Right cardiac atrium (tissue), 5 donors: ENCODE measurements at regions of chr7 and their contacts with region 1.

Region 1: DNA sequence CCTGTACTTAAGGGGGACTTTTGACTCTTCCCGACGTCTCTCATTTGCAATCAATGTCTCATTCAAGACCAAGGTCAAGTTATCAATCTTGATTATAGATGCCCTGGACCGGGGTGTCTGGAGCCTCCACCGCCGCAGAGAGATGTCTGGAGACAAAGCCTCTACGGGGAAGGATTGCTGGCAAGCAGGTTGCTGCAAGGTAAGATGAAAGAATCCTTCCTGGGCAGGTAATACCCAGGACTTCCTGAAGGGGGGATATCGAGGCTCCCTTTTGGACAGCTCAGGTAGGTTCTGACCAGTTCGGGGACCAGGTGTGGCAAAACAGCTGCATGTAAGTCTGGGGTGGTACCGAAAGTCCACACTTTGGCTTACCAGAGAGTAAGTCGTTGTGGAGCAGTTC is 12.5 kb upstream of the CUX1 start:
- DNase-seq: no peak
- ATAC-seq: no peak
- H3K4me3 ChIP-seq: no peak overlapping the region
- H3K27ac ChIP-seq: no peak overlapping the region
- H3K4me1 ChIP-seq: no peaks in the 10 kb centered on the region
- H3K27me3 ChIP-seq: no peaks in the 10 kb centered on the region

Region 2: DNA sequence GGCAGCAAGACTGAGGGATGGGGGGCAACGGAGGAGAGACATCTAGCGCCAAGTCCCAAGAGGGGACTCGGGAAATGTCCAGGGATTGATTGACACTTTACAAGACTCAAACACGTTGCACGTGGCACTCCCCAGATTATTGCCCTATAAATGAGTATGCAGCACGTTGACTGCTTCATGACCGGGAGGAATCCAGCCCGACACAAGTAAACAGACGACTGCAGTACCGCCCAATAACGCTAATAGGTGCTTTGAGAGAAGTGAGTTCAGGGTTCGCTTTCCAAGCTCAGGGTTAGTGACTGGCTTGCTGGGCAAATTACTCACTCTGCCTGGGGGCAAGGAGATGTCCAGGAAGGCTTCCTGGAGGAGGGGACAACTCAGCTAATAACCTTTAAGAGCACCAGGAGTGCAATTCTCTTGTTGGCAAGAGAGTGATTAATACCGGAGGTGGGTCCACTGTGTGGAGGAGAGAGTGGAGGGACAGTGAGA is 102.6 kb before region 1 on chr7:
- intact Hi-C with region 1: loop called in 1 of 4 experiments (anchors 10 kb)
- DNase-seq: no peak
- ATAC-seq: no peak
- H3K4me3 ChIP-seq: no peak overlapping the region
- H3K27ac ChIP-seq: no peak overlapping the region
- H3K4me1 ChIP-seq: no peaks in the 10 kb centered on the region
- H3K27me3 ChIP-seq: no peaks in the 10 kb centered on the region

Region 3: GRCh38 chr7:101743241-101743994 is 61.5 kb before region 1 on chr7:
- intact Hi-C with region 1: loop called in 3 of 4 experiments (anchors 5 to 10 kb)
- DNase-seq: peak; percentile 50 to 82 (median 81)
- ATAC-seq: peak; percentile 69 to 76
- H3K4me3 ChIP-seq: peak overlapping the region; percentile 34
- H3K27ac ChIP-seq: no peak overlapping the region
- H3K4me1 ChIP-seq: no peaks in the 10 kb centered on the region
- H3K27me3 ChIP-seq: no peaks in the 10 kb centered on the region